ENCODE measurements at regions of chr13 and their contacts with region 1.

Region 1: DNA sequence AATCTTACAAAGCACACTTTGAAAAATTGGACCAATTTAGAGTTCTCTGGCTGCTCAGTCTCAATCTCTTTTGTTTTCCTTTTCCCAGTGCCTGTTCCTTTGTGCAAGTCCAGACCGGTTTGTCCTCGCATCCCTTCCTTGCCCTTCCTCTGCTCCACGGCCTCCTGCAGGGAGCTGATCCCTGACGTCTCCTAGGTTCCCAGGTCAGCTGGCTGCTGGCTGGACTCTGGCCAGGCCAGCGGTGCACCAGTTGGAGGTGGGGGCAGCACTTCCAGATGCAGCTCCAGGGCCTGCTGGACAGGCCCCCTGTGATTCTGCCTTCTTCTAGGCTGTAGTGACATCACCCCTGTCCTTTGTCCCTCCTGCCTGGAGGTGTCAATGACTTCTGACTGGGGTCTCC is 44.0 kb upstream of the KPNA3 start:
- DNase-seq: peak; percentile 36
- H3K4me3 ChIP-seq: no peak overlapping the region
- H3K27ac ChIP-seq: no peak overlapping the region
- H3K4me1 ChIP-seq: peaks cover 15% of the 10 kb centered on the region
- H3K27me3 ChIP-seq: no peaks in the 10 kb centered on the region
- CTCF ChIP-seq: no peak

Region 2: DNA sequence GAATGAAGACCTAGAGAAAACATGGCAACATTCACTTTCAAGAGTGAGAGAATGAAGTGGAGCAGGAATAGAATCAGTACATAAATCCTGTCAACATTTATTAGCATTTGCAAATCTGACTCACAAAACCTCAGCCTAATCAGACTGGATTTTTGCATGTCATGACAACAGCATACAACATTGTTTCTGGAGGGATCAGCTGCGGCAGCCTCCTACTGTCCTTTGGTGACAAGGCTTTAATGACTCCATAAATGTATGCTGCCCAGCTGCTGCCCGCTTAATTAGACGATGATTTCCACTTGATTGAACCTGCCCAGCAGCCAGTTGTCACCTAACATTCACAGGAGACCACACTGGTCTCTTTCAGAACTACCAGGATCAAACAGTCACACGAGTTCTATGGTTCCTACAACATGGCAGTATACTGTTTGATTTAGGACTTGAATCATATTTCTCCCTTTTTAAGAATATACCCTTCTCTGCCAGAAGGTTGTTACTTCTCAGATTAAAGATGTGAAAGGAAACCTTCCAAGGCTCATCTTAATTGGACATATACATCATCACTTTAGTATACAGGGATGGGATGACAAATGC is 154.6 kb before region 1 on chr13:
- CTCF ChIA-PET with region 1: no interaction called
- dilution Hi-C with region 1: no loop called
- in situ Hi-C with region 1: loop called in 1 of 2 experiments (anchors 10 kb)
- intact Hi-C with region 1: no loop called
- DNase-seq: peak; percentile 63
- H3K4me3 ChIP-seq: no peak overlapping the region
- H3K27ac ChIP-seq: no peak overlapping the region
- H3K4me1 ChIP-seq: peaks cover 4% of the 10 kb centered on the region
- H3K27me3 ChIP-seq: no peaks in the 10 kb centered on the region
- CTCF ChIP-seq: no peak

Region 3: GRCh38 chr13:50244713-50245574 is 408.4 kb after region 1 on chr13:
- CTCF ChIA-PET with region 1: no interaction called
- dilution Hi-C with region 1: no loop called
- in situ Hi-C with region 1: no loop called
- intact Hi-C with region 1: no loop called
- DNase-seq: peak; percentile 97
- H3K4me3 ChIP-seq: no peak overlapping the region
- H3K27ac ChIP-seq: no peak overlapping the region
- H3K4me1 ChIP-seq: peaks cover 15% of the 10 kb centered on the region
- H3K27me3 ChIP-seq: no peaks in the 10 kb centered on the region
- CTCF ChIP-seq: no peak

Measured in mammary epithelial cell (primary cell).